PC-9 (cell line): ENCODE measurements at regions of chr18 and their contacts with region 1.

Region 1: GRCh38 chr18:36850530-36851201 is 21.7 kb downstream of the KIAA1328 start:
- DNase-seq: peak in 1 of 2 experiments; percentile 52
- H3K4me3 ChIP-seq: no peak overlapping the region
- H3K27ac ChIP-seq: no peak overlapping the region
- H3K4me1 ChIP-seq: peaks cover 11% of the 10 kb centered on the region
- H3K27me3 ChIP-seq: no peaks in the 10 kb centered on the region
- CTCF ChIP-seq: no peak

Region 2: DNA sequence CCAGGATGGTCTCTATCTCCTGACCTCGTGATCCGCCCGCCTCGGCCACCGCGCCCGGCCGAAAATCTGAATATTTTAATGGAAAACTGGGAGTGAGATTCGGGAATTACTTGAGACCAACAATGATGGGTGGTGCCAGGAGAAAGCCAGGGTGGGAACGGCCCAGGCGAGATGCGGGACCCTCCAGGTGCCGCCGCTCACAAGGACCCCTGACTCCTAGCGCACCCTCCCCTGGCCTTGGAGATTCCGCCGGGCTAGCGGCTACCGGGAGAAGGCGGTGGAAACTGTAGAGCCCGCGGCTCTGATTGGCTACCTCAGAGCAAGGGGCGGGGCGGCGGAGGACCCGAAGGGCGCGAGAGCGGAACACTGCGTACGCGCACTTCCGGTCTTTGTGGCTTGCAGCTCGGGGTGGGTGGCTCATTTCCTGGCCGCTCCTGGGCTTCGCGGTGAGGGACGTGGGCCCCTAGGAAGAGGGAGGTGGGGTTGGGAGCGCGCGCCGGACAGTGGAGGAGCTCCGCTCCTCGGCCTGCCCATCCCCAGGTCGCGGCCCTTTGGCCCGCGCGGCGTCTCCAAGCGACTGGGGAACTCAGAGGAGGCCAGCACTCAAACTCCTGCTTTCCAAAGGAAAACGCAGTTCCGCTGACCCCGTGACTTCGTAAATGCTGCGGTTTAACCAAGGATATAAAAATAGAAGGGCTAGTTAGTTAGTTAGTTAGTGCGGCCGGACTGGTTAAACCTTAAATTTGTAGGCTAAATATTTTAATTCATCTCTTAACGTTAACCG is 1609.8 kb before region 1 on chr18 and contains the start of gene ZNF397:
- CTCF ChIA-PET with region 1: no interaction called
- POLR2A ChIA-PET with region 1: interaction called, 23 read pairs
- intact Hi-C with region 1: no loop called
- DNase-seq: peak; percentile 80 to 87
- H3K4me3 ChIP-seq: peak within 1 kb of the TSS; percentile 92
- H3K27ac ChIP-seq: peak within 1 kb of the TSS; percentile 67
- H3K4me1 ChIP-seq: no peaks in the 10 kb centered on the region; the same call in 1 of the 2 replicates
- H3K27me3 ChIP-seq: no peaks in the 10 kb centered on the region
- CTCF ChIP-seq: no peak
- total RNA-seq, gene ZNF397: 8.1 and 9.3 TPM in 2 replicates

Region 3: GRCh38 chr18:36828630-36829361 is 21.9 kb before region 1 on chr18 and contains the starts of genes KIAA1328 and TPGS2:
- CTCF ChIA-PET with region 1: no interaction called
- POLR2A ChIA-PET with region 1: no interaction called
- intact Hi-C with region 1: loop called (anchors 1 kb)
- DNase-seq: peak; percentile 65 to 81
- H3K4me3 ChIP-seq: peak within 1 kb of the TSS; percentile 74
- H3K27ac ChIP-seq: peak within 1 kb of the TSS; percentile 71
- H3K4me1 ChIP-seq: peaks cover 19% of the 10 kb centered on the region
- H3K27me3 ChIP-seq: no peaks in the 10 kb centered on the region
- CTCF ChIP-seq: peak; percentile 43; the same call in 1 of the 2 replicates
- total RNA-seq, gene KIAA1328: 4.0 and 6.5 TPM in 2 replicates
- total RNA-seq, gene TPGS2: 59.5 and 62.6 TPM in 2 replicates

Region 4: DNA sequence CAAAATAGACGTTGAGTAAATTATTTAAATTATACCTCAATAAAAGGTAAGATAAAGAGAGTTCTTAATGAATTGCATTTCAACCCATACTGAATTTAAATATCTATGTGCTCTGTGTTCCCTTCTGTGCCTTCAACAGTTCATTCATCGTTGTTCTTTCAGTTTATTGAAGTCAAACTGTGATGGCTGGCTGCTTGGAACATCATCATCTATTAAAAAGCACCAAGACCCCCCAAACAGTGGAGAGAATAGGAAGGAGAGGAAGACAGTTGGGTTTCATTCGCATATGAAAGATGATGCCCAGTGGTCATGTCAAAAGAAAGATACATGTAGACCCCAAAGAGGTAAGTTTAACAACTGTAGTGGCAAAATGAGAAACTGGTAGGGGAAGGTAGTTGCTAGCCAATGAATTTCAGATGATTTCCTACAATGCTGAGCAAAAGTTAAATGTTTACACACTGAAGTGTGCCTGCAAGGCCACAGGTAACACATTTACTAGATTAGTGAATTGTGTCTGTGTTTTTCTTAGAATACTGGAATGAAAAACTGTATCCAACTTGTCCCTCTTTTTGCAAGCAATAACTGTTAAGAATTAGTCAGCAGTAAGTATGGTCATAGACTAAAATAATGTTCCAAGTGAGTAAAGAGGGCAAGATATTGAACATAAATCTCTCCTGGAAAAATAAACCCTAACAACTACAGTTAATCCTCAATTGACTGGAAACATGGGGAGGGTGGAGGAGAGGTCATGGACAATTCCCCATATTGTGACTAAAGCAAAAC is 309.6 kb after region 1 on chr18:
- CTCF ChIA-PET with region 1: no interaction called
- POLR2A ChIA-PET with region 1: no interaction called
- intact Hi-C with region 1: no loop called
- DNase-seq: no peak
- H3K4me3 ChIP-seq: no peak overlapping the region
- H3K27ac ChIP-seq: no peak overlapping the region
- H3K4me1 ChIP-seq: no peaks in the 10 kb centered on the region
- H3K27me3 ChIP-seq: no peaks in the 10 kb centered on the region
- CTCF ChIP-seq: no peak